ENCODE measurements at regions of chr19 and their contacts with region 1.

Region 1: DNA sequence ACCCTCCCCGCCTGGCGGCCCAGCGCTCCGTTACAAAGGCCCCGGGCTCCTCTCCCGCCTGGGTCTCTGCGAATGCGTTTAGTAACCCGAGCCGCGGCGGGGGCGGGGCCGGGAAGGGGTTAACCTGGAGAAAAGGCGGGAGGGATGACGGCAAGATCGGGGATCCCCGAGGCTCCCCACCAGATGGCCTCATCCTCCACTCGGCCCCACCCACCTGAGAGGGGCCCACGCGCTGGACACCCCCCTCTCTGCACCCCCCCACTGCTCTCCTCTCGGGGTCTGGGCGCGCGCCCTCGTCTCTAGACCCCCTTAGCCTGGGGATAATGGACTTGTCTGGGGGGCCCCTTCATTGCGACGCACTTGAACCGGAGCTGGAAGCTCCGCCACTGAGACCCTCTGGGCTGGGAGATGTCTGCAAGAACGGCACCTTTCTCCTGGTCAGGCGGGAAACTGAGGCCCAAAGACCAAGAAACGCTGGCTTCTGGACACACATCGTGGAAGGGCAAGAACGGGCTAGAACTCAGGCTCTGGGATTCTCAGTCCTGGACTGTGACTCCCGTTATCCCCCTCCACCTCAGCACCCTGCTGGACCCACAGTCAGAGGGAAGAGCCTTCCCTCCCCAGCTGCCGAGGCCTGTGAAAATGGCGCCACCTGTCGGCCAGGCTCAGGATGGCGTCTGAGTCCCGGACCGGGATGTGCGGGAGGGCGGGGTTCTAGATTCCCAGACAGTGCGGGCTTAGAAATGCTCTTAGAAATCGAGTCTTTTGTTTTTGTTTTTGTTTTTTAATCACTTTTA is 2.9 kb upstream of the LTBP4 start:
- DNase-seq: peak; percentile 89 to 95
- H3K4me3 ChIP-seq: no peak overlapping the region
- H3K4me3 Mint-ChIP-seq: peak overlapping the region; percentile 32
- H3K27ac Mint-ChIP-seq: no peak overlapping the region
- H3K4me1 ChIP-seq: peaks cover 29% of the 10 kb centered on the region
- H3K4me1 Mint-ChIP-seq: peaks cover 27% of the 10 kb centered on the region
- H3K27me3 ChIP-seq: peaks cover 4% of the 10 kb centered on the region; the same call in 1 of the 2 replicates
- H3K27me3 Mint-ChIP-seq: peaks cover 19% of the 10 kb centered on the region
- CTCF ChIP-seq: peak; percentile 97 to 99

Region 2: DNA sequence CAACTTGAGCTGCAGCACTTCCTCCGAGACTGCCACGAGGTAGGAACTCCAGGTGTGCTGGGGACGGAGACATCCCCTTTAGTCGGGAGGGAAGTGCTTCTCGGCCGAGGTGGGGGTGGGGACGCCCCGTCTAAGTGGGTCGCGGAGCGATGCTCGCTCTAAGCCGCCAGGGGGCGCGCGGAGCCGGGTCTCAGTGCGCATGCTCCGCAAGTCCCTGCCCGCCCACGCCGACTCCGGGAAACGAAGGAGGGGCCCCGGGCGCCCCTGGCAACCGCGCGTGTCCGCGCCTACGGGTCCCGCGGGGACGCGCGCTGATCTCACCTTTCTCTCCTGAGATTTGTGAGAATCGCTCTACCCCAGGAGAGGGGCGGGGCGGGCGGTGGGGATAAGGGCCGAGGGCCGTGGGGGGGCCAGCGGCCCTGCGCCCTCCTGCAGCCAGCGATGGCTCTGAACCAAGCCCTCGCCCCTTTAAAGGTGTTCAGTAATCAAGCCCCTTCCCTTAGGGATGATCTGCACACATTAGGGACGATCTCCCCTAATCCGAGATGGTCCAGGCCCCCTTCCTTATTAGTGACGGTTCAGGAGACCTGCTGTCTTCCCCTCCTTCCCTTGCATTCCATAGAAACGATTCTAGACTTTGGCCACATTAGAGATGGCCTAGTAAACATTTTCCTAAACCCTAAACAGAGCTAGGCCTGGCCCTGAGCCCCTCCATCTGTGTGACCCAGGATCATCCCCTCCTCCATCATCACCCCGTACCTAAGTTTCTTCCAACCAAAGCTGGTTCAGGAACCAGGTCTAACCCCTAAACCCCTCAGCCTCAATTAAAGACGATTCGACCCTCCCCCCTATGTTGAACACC is 69.0 kb before region 1 on chr19:
- CTCF ChIA-PET with region 1: interaction called, 10 read pairs
- POLR2A ChIA-PET with region 1: no interaction called
- intact Hi-C with region 1: loop called (anchors 2 kb)
- DNase-seq: peak; percentile 85 to 91
- H3K4me3 ChIP-seq: peak overlapping the region; percentile 49
- H3K4me3 Mint-ChIP-seq: peak overlapping the region; percentile 72
- H3K27ac Mint-ChIP-seq: peak overlapping the region; percentile 19
- H3K4me1 ChIP-seq: peaks cover 12% of the 10 kb centered on the region
- H3K4me1 Mint-ChIP-seq: peaks cover 7% of the 10 kb centered on the region
- H3K27me3 ChIP-seq: no peaks in the 10 kb centered on the region
- H3K27me3 Mint-ChIP-seq: no peaks in the 10 kb centered on the region
- CTCF ChIP-seq: peak; percentile 94 to 98

Region 3: DNA sequence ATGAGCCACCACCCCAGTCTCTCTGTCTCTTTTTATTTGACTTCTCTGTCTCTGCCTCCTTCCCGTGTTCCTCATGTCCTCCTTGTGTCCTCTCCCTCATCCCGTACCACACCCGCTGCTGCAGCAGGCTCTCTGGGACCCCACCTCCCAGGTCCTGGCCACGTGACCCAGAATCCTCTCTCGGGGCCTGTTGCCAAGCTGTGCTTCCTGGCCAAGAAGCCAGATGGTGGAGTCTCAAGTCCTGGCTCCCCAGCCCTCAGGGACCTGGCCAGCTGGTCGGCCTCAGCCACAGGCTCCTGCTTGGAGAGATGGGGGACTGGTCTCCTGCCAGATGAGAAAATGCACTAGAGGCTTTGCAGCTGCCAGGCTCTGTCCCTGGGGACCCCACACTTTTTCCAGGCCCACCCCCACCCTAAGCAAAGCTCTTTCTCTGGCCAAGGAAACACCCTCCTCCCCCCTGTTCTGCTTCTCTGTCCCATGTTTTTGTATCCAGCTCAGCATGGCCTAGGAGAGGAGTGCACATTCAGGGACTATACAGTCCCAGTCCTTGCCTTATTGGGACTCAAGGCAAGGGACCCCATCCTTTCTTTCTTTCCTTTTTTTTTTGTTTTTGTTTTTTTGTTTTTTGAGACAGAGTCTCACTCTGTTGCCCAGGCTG is 56.0 kb before region 1 on chr19:
- CTCF ChIA-PET with region 1: interaction called, 11 read pairs
- POLR2A ChIA-PET with region 1: no interaction called
- intact Hi-C with region 1: loop called (anchors 2 kb)
- DNase-seq: no peak
- H3K4me3 ChIP-seq: no peak overlapping the region
- H3K4me3 Mint-ChIP-seq: no peak overlapping the region
- H3K27ac Mint-ChIP-seq: no peak overlapping the region
- H3K4me1 ChIP-seq: no peaks in the 10 kb centered on the region
- H3K4me1 Mint-ChIP-seq: no peaks in the 10 kb centered on the region
- H3K27me3 ChIP-seq: no peaks in the 10 kb centered on the region
- H3K27me3 Mint-ChIP-seq: peaks cover 2% of the 10 kb centered on the region
- CTCF ChIP-seq: no peak

Region 4: DNA sequence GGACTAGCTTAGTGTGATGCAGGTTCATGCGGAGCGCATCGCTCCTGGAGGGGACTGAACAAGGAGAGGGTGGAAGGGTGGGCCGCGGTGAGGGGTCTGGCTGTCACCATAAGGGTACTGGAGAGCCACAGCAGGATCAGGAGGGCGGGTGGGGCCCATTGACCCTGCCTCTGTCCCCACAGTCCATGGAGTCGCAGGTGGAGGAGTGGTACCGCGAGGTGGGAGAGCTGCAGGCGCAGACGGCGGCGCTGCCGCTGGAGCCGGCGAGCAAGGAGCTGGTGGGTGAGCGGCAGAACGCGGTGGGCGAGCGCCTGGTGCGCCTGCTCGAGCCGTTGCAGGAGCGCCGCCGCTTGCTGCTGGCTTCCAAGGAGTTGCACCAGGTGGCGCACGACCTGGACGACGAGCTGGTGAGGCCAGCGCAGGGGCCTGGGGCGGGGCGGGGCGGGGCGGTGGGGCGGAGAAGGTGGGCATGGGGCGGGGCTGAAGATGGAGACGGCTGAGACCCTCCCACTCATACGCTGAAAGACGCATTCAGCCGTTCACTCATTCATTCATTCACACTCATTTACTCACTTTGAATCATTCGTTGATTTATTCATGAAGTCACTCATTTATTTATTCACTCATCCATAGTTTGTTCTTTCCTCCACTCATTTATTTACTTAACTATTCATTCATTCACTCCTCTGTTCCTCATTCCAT is 49.2 kb before region 1 on chr19:
- CTCF ChIA-PET with region 1: interaction called, 20 read pairs
- POLR2A ChIA-PET with region 1: no interaction called
- intact Hi-C with region 1: loop called (anchors 2 kb)
- DNase-seq: peak; percentile 83 to 88
- H3K4me3 ChIP-seq: peak overlapping the region; percentile 6; the same call in 1 of the 2 replicates
- H3K4me3 Mint-ChIP-seq: peak overlapping the region; percentile 62
- H3K27ac Mint-ChIP-seq: no peak overlapping the region
- H3K4me1 ChIP-seq: 0 out of 2 replicates have a peak, but pooled peaks cover 10% of the 10 kb centered on the region
- H3K4me1 Mint-ChIP-seq: peaks cover 7% of the 10 kb centered on the region
- H3K27me3 ChIP-seq: no peaks in the 10 kb centered on the region; the same call in 1 of the 2 replicates
- H3K27me3 Mint-ChIP-seq: peaks cover 8% of the 10 kb centered on the region
- CTCF ChIP-seq: peak; percentile 54 to 71

Region 5: GRCh38 chr19:40576585-40577451 is 21.5 kb before region 1 on chr19 and contains the start of gene SHKBP1:
- CTCF ChIA-PET with region 1: no interaction called
- POLR2A ChIA-PET with region 1: no interaction called
- intact Hi-C with region 1: loop called (anchors 2 kb)
- DNase-seq: peak; percentile 95 to 96
- H3K4me3 ChIP-seq: peak within 1 kb of the TSS; percentile 46
- H3K4me3 Mint-ChIP-seq: peak within 1 kb of the TSS; percentile 76
- H3K27ac Mint-ChIP-seq: peak within 1 kb of the TSS; percentile 77
- H3K4me1 ChIP-seq: peaks cover 4% of the 10 kb centered on the region; the same call in 1 of the 2 replicates
- H3K4me1 Mint-ChIP-seq: peaks cover 11% of the 10 kb centered on the region
- H3K27me3 ChIP-seq: no peaks in the 10 kb centered on the region
- H3K27me3 Mint-ChIP-seq: no peaks in the 10 kb centered on the region
- CTCF ChIP-seq: no peak
- total RNA-seq, gene SHKBP1: 81.6 and 82.6 TPM in 2 replicates

Measured in Caco-2 (cell line).